Dorsolateral prefrontal cortex (tissue), 120 donors: ENCODE measurements at regions of chr15 and their contacts with region 1.

Region 1: GRCh38 chr15:50003786-50004334 is 115.2 kb downstream of the ATP8B4 start:
- DNase-seq: peak in 9 of 10 donors; percentile 78 to 93 (median 86)
- H3K4me3 ChIP-seq: peak overlapping the region in 3 of 59 donors; percentile 7 to 16 (median 9)
- H3K27ac ChIP-seq: peak overlapping the region in 57 of 59 donors; percentile 53 to 96 (median 90)
- H3K27me3 ChIP-seq: no peaks in the 10 kb centered on the region
- CTCF ChIP-seq: peak in 55 of 56 donors; percentile 41 to 87 (median 72)

Region 2: GRCh38 chr15:49620658-49621368 is 383.0 kb before region 1 on chr15 and contains the starts of genes DTWD1 and FAM227B:
- intact Hi-C with region 1: loop called (anchors 5 to 10 kb)
- DNase-seq: peak; percentile 85 to 95 (median 92)
- H3K4me3 ChIP-seq: peak within 1 kb of the TSS; percentile 63 to 97 (median 79)
- H3K27ac ChIP-seq: peak within 1 kb of the TSS; percentile 35 to 95 (median 88)
- H3K27me3 ChIP-seq: no peaks in the 10 kb centered on the region
- CTCF ChIP-seq: peak in 49 of 56 donors; percentile 3 to 66 (median 36)
- total RNA-seq, gene DTWD1: 27.6 to 57.4 (median 39.4) TPM
- total RNA-seq, gene FAM227B: 1.9 to 17.2 (median 8.4) TPM

Region 3: GRCh38 chr15:49901996-49902684 is 101.7 kb before region 1 on chr15:
- intact Hi-C with region 1: loop called in 1 of 2 experiments (anchors 5 kb)
- DNase-seq: no peak
- H3K4me3 ChIP-seq: peak overlapping the region in 13 of 59 donors; percentile 2 to 56 (median 18)
- H3K27ac ChIP-seq: peak overlapping the region; percentile 72 to 96 (median 90)
- H3K27me3 ChIP-seq: no peaks in the 10 kb centered on the region
- CTCF ChIP-seq: peak in 51 of 56 donors; percentile 21 to 68 (median 46)

Region 4: GRCh38 chr15:50051803-50052419 is 48.1 kb after region 1 on chr15:
- intact Hi-C with region 1: loop called in 1 of 2 experiments (anchors 5 kb)
- DNase-seq: peak in 7 of 10 donors; percentile 11 to 77 (median 45)
- H3K4me3 ChIP-seq: peak overlapping the region in 1 of 59 donors; percentile 14
- H3K27ac ChIP-seq: peak overlapping the region in 21 of 59 donors; percentile 0 to 62 (median 37)
- H3K27me3 ChIP-seq: no peaks in the 10 kb centered on the region
- CTCF ChIP-seq: peak; percentile 46 to 89 (median 73)